Naive thymus-derived CD4-positive, alpha-beta T cell (primary cell): ENCODE measurements at regions of chr1 and their contacts with region 1.

Region 1: GRCh38 chr1:41678111-41678878 is 193.8 kb upstream of the EDN2 start:
- DNase-seq: no peak
- ATAC-seq: peak; percentile 46
- H3K4me3 ChIP-seq: no peak overlapping the region
- H3K4me3 Mint-ChIP-seq: peak overlapping the region in 2 of 10 donors; percentile 43 to 76
- H3K27ac ChIP-seq: no peak overlapping the region
- H3K27ac Mint-ChIP-seq: peak overlapping the region in 1 of 9 donors; percentile 90
- H3K4me1 ChIP-seq: peaks cover 40 to 49% of the 10 kb centered on the region in 2 donors
- H3K4me1 Mint-ChIP-seq: peaks cover 30 to 92% (median 58%) of the 10 kb centered on the region in 7 donors
- H3K27me3 ChIP-seq: no peaks in the 10 kb centered on the region
- H3K27me3 Mint-ChIP-seq: no peaks in the 10 kb centered on the region

Region 2: GRCh38 chr1:41583658-41584547 is 94.4 kb before region 1 on chr1:
- CTCF ChIA-PET with region 1: no interaction called
- POLR2A ChIA-PET with region 1: no interaction called
- intact Hi-C with region 1: no loop called
- DNase-seq: peak in 1 of 9 donors; percentile 15
- ATAC-seq: no peak
- H3K4me3 ChIP-seq: no peak overlapping the region
- H3K4me3 Mint-ChIP-seq: no peak overlapping the region
- H3K27ac ChIP-seq: no peak overlapping the region
- H3K27ac Mint-ChIP-seq: peak overlapping the region in 1 of 9 donors; percentile 49
- H3K4me1 ChIP-seq: no peaks in the 10 kb centered on the region
- H3K4me1 Mint-ChIP-seq: peaks cover 0 to 20% (median 0%) of the 10 kb centered on the region in 7 donors
- H3K27me3 ChIP-seq: no peaks in the 10 kb centered on the region
- H3K27me3 Mint-ChIP-seq: no peaks in the 10 kb centered on the region

Region 3: DNA sequence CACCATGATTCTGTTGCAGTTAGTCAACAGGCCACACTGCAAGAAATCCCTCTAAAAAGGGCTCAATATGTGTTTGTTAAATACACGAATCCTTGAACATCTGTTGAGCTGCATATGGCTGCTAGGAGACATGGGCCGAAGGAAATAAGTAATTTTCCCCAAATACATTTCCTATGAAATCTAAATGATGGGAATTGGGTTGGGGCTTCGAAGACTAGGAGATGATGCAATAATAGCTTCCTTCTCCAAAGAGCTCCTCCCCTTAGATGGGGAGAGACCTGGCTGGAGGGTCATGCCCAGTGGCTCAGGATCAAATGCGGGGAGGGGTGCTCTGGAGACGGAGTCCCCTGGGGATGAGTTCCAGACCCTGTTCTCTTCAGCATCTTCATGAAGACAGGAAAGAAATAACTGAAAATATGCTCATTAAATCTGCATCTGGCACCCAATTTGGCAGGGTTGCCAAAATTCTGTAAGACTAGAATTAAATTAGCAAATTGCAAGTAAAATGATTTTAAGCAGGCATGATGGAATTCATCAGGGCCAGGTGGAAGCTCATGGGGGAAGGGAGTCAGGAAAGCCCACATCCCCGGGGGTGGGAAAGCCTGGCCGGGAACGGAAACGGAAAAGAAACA is 28.8 kb before region 1 on chr1:
- CTCF ChIA-PET with region 1: no interaction called
- POLR2A ChIA-PET with region 1: interaction called, 3 read pairs
- intact Hi-C with region 1: loop called in 1 of 2 experiments (anchors 1 kb)
- DNase-seq: no peak
- ATAC-seq: no peak
- H3K4me3 ChIP-seq: no peak overlapping the region
- H3K4me3 Mint-ChIP-seq: peak overlapping the region in 4 of 10 donors; percentile 6 to 42 (median 37)
- H3K27ac ChIP-seq: no peak overlapping the region
- H3K27ac Mint-ChIP-seq: peak overlapping the region in 4 of 9 donors; percentile 18 to 65 (median 39)
- H3K4me1 ChIP-seq: peaks cover 3 to 10% of the 10 kb centered on the region in 2 donors
- H3K4me1 Mint-ChIP-seq: peaks cover 17 to 65% (median 28%) of the 10 kb centered on the region in 7 donors
- H3K27me3 ChIP-seq: no peaks in the 10 kb centered on the region
- H3K27me3 Mint-ChIP-seq: no peaks in the 10 kb centered on the region